ENCODE measurements at regions of chr14 and their contacts with region 1.

Region 1: DNA sequence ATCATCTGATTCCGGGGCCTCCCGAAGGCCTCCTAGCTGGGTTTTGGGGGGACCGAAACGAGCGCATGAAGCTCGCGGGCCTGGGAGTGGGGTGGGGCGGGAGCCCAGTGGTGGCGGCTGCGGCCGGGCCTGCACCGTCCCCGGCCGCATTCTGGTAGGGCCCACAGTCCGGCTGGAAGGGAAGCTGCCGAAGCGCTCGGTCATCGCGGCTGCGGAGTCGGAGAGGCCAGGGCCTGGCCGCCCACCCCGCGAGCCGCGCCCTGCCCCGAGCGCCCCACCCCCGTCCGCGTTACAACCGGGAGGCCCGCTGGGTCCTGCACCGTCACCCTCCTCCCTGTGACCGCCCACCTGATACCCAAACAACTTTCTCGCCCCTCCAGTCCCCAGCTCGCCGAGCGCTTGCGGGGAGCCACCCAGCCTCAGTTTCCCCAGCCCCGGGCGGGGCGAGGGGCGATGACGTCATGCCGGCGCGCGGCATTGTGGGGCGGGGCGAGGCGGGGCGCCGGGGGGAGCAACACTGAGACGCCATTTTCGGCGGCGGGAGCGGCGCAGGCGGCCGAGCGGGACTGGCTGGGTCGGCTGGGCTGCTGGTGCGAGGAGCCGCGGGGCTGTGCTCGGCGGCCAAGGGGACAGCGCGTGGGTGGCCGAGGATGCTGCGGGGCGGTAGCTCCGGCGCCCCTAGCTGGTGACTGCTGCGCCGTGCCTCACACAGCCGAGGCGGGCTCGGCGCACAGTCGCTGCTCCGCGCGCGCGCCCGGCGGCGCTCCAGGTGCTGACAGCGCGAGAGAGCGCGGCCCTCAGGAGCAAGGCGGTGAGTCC is at the start of gene KLC1:
- DNase-seq: peak; percentile 63 to 79 (median 63)
- H3K4me3 ChIP-seq: peak within 1 kb of the TSS; percentile 62 to 91 (median 86)
- H3K4me3 Mint-ChIP-seq: peak within 1 kb of the TSS; percentile 85 to 92
- H3K27ac ChIP-seq: peak within 1 kb of the TSS; percentile 81 to 96
- H3K27ac Mint-ChIP-seq: peak within 1 kb of the TSS; percentile 91 to 97 (median 95)
- H3K4me1 ChIP-seq: peaks cover 32 to 44% of the 10 kb centered on the region in 2 donors
- H3K4me1 Mint-ChIP-seq: peaks cover 45% of the 10 kb centered on the region
- H3K27me3 ChIP-seq: peaks cover 0 to 14% of the 10 kb centered on the region in 2 donors
- H3K27me3 Mint-ChIP-seq: peaks cover 7 to 25% (median 14%) of the 10 kb centered on the region in 3 donors
- CTCF ChIP-seq: no peak
- polyA plus RNA-seq, gene KLC1: 41.5 to 108 (median 46.6) TPM

Region 2: DNA sequence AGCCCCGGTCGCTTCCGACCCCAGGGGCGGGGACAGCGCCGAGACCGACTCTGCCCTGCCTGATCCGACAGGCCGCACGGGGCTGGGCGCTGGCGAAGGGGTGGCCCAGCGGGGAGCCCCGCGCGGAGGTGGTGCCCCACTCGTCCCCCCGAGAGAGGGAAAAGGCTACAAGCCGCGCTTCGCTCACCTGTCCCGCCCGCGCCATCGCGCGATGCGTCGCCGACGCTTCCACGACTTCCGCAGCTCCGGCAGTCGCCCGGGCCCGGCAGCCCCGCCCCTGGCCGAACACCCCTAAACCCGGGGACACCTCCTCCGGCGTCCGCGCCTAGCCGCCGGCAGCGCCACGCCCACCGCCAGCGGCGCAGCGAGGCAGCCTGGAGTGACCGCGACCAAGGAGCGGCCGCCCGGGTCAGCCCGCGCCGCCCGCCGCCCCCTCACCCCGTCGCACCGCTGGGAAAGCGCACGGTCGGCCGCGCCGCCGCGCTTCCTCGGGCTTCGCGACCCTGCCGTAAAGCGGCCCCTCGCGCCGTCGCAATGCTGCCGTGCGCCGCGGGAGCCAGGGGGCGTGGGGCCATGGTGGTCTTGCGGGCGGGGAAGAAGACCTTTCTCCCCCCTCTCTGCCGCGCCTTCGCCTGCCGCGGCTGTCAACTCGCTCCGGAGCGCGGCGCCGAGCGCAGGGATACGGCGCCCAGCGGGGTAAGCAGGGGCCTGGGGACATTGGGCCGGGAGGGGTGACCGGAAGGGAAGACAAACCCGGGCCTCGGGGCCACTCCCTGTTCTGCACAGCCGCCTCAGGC is 66.3 kb before region 1 on chr14 and contains the starts of genes BAG5 and COA8:
- intact Hi-C with region 1: loop called (anchors 2 to 5 kb)
- DNase-seq: peak; percentile 63 to 75 (median 71)
- H3K4me3 ChIP-seq: peak within 1 kb of the TSS; percentile 89 to 98 (median 92)
- H3K4me3 Mint-ChIP-seq: peak within 1 kb of the TSS; percentile 91 to 96
- H3K27ac ChIP-seq: peak within 1 kb of the TSS; percentile 68 to 88
- H3K27ac Mint-ChIP-seq: peak within 1 kb of the TSS; percentile 82 to 91 (median 88)
- H3K4me1 ChIP-seq: peaks cover 24 to 31% of the 10 kb centered on the region in 2 donors
- H3K4me1 Mint-ChIP-seq: peaks cover 36% of the 10 kb centered on the region
- H3K27me3 ChIP-seq: no peaks in the 10 kb centered on the region
- H3K27me3 Mint-ChIP-seq: no peaks in the 10 kb centered on the region
- CTCF ChIP-seq: no peak
- polyA plus RNA-seq, gene BAG5: 4.7 to 33.1 (median 30.1) TPM
- polyA plus RNA-seq, gene COA8: 13.2 to 58.1 (median 52.3) TPM

Region 3: GRCh38 chr14:103715052-103716000 is 86.4 kb after region 1 on chr14 and contains the starts of genes XRCC3 and ZFYVE21:
- intact Hi-C with region 1: loop called in 1 of 2 experiments (anchors 5 kb)
- DNase-seq: peak; percentile 99 to 100 (median 99)
- H3K4me3 ChIP-seq: peak within 1 kb of the TSS; percentile 42 to 77 (median 65)
- H3K4me3 Mint-ChIP-seq: peak within 1 kb of the TSS; percentile 83 to 89
- H3K27ac ChIP-seq: peak within 1 kb of the TSS in 1 of 2 donors; percentile 41
- H3K27ac Mint-ChIP-seq: peak within 1 kb of the TSS in 5 of 7 donors; percentile 22 to 80 (median 41)
- H3K4me1 ChIP-seq: peaks cover 16 to 26% of the 10 kb centered on the region in 2 donors
- H3K4me1 Mint-ChIP-seq: peaks cover 29% of the 10 kb centered on the region
- H3K27me3 ChIP-seq: no peaks in the 10 kb centered on the region
- H3K27me3 Mint-ChIP-seq: peaks cover 0 to 1% (median 0%) of the 10 kb centered on the region in 3 donors
- CTCF ChIP-seq: no peak
- polyA plus RNA-seq, gene XRCC3: 0.66 to 8.1 (median 2.0) TPM
- polyA plus RNA-seq, gene ZFYVE21: 22.1 to 36.5 (median 33.1) TPM